Heart left ventricle (tissue), 16 donors: ENCODE measurements at regions of chr7 and their contacts with region 1.

Region 1: DNA sequence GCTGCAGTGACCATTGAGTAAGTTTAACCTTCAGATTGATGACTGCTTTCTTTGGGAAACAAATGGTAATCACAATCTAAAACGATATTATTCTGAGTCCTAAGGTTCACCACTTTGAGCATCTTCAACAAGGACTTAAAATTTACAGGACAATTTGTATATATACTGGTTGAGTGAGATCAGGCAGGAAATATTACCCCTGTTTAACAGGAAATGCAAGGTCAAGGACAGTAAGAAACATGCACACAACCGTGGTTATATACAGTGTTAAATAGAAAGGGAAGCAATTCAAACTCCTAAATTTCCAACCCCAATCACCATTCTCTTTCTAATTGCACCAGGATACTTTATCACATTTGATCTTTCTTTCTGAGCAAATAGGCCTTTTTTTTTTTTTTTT is 96.1 kb downstream of the ZNF277 start:
- DNase-seq: no peak
- ATAC-seq: no peak
- H3K4me3 ChIP-seq: no peak overlapping the region
- H3K27ac ChIP-seq: no peak overlapping the region
- H3K4me1 ChIP-seq: peaks cover 0 to 6% (median 0%) of the 10 kb centered on the region in 12 donors
- H3K27me3 ChIP-seq: no peaks in the 10 kb centered on the region
- CTCF ChIP-seq: no peak
- POLR2A ChIP-seq: no peak

Region 2: GRCh38 chr7:112226701-112227276 is 75.8 kb before region 1 on chr7:
- intact Hi-C with region 1: loop called in 1 of 10 experiments (anchors 10 kb)
- DNase-seq: no peak
- ATAC-seq: no peak
- H3K4me3 ChIP-seq: no peak overlapping the region
- H3K27ac ChIP-seq: no peak overlapping the region
- H3K4me1 ChIP-seq: peaks cover 0 to 31% (median 13%) of the 10 kb centered on the region in 12 donors
- H3K27me3 ChIP-seq: no peaks in the 10 kb centered on the region
- CTCF ChIP-seq: no peak
- POLR2A ChIP-seq: no peak